Heart left ventricle (tissue), 16 donors: ENCODE measurements at regions of chr20 and their contacts with region 1.

Region 1: GRCh38 chr20:9359561-9360308 is 154.7 kb upstream of the LAMP5 start:
- DNase-seq: peak in 4 of 5 donors; percentile 29 to 48 (median 42)
- ATAC-seq: peak; percentile 49 to 78 (median 68)
- H3K4me3 ChIP-seq: peak overlapping the region in 1 of 12 donors; percentile 11
- H3K27ac ChIP-seq: peak overlapping the region in 5 of 12 donors; percentile 4 to 46 (median 24)
- H3K4me1 ChIP-seq: peaks cover 0 to 20% (median 11%) of the 10 kb centered on the region in 12 donors
- H3K27me3 ChIP-seq: no peaks in the 10 kb centered on the region
- CTCF ChIP-seq: peak; percentile 27 to 74 (median 60)
- POLR2A ChIP-seq: no peak

Region 2: DNA sequence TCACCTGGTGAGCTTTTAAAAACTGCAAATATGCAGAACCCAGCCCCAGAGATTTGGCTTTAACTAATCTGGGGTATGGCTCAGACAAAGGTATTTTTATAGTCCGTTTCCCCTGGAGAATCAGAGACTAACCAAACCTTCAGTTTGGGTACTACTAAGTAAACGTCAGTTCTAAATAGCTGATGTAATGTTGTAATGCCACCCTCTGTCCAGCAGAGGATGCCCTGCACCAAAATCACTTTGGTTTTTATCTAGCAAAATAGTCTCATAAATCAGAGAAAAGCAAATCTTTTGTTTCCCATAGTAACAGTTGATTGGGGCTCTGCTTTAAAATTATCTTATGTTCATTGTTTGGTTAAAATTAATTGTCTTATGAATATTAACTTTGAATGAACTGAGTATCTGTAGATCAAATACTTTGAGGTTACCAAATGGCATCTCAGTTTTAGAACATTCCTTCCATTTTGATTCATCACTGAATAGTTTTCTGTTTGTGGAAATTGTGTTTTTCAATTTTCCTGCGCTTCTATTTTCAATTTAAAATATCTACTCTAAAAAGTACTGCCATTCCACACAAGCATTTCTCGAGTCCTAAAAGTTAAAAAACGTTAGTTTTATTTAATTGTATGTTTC is 569.2 kb before region 1 on chr20:
- intact Hi-C with region 1: loop called (anchors 1 to 5 kb)
- DNase-seq: peak in 3 of 5 donors; percentile 19 to 38 (median 37)
- ATAC-seq: peak in 1 of 4 donors; percentile 50
- H3K4me3 ChIP-seq: no peak overlapping the region
- H3K27ac ChIP-seq: no peak overlapping the region
- H3K4me1 ChIP-seq: peaks cover 0 to 8% (median 0%) of the 10 kb centered on the region in 12 donors
- H3K27me3 ChIP-seq: no peaks in the 10 kb centered on the region
- CTCF ChIP-seq: peak; percentile 86 to 100 (median 94)
- POLR2A ChIP-seq: no peak

Region 3: DNA sequence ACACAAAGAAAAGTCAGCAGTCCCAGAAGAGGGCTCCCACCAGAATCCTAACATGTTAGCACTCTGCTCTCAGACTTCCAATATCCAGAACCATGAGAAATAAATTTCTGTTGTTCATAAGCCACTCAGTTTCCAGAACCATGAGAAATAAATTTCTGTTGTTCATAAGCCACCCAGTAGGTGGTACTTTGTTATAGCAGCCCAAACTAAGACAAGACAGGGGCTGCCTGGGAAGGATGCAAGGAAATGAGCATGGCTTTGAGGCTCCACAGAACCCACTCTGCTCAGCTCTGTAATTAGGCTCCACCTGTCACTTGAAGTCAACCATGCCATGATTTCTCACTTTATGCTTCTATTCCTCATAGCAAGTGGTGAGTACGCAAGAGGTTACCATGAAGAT is 383.4 kb before region 1 on chr20:
- intact Hi-C with region 1: loop called in 1 of 10 experiments (anchors 10 kb)
- DNase-seq: no peak
- ATAC-seq: no peak
- H3K4me3 ChIP-seq: no peak overlapping the region
- H3K27ac ChIP-seq: no peak overlapping the region
- H3K4me1 ChIP-seq: peaks cover 0 to 15% (median 5%) of the 10 kb centered on the region in 12 donors
- H3K27me3 ChIP-seq: no peaks in the 10 kb centered on the region
- CTCF ChIP-seq: no peak
- POLR2A ChIP-seq: no peak

Region 4: GRCh38 chr20:9172851-9173250 is 186.9 kb before region 1 on chr20:
- intact Hi-C with region 1: loop called in 1 of 10 experiments (anchors 10 kb)
- DNase-seq: no peak
- ATAC-seq: peak in 3 of 4 donors; percentile 55 to 65 (median 64)
- H3K4me3 ChIP-seq: no peak overlapping the region
- H3K27ac ChIP-seq: peak overlapping the region in 1 of 12 donors; percentile 13
- H3K4me1 ChIP-seq: peaks cover 0 to 34% (median 20%) of the 10 kb centered on the region in 12 donors
- H3K27me3 ChIP-seq: no peaks in the 10 kb centered on the region
- CTCF ChIP-seq: peak in 11 of 12 donors; percentile 20 to 66 (median 44)
- POLR2A ChIP-seq: no peak

Region 5: GRCh38 chr20:9185511-9185910 is 174.2 kb before region 1 on chr20:
- intact Hi-C with region 1: no loop called
- DNase-seq: no peak
- ATAC-seq: peak in 1 of 4 donors; percentile 18
- H3K4me3 ChIP-seq: no peak overlapping the region
- H3K27ac ChIP-seq: no peak overlapping the region
- H3K4me1 ChIP-seq: peaks cover 0 to 21% (median 10%) of the 10 kb centered on the region in 12 donors
- H3K27me3 ChIP-seq: no peaks in the 10 kb centered on the region
- CTCF ChIP-seq: no peak
- POLR2A ChIP-seq: no peak

Region 6: DNA sequence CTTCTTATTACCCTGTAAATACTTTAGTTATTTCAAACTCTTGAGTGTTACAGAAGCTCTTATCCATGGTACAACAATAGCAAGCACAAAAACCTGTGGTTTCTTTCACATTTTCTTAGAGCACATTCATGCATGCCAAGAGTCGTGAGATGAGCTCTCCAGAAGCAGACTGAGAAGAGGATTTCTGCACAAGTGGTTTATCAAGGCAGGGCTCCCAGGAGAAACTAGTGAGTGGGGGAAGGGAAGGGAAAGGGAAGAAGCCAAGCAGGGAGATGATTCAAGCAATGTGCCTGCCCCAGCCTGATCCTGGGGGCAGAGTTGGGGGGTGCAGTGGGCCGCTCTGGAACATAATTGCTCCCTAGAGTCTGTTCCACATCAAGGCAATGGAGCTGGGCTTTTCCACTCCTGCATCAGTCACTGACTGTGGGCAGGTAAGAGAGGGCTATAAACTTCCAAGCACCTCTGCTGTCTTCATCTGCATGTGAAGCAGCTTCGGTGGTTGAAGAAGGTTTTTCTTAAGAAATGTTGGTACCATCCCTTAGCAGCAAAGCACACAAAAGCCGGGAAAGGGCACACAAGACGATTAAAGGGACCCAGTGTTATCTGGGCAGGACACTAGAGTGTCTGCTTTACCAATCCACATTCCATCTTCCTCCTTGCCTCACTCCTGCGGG is 138.7 kb before region 1 on chr20:
- intact Hi-C with region 1: loop called in 2 of 10 experiments (anchors 10 kb)
- DNase-seq: peak in 1 of 5 donors; percentile 25
- ATAC-seq: peak in 1 of 4 donors; percentile 7
- H3K4me3 ChIP-seq: no peak overlapping the region
- H3K27ac ChIP-seq: peak overlapping the region in 2 of 12 donors; percentile 10 to 16
- H3K4me1 ChIP-seq: peaks cover 4 to 56% (median 29%) of the 10 kb centered on the region in 12 donors
- H3K27me3 ChIP-seq: no peaks in the 10 kb centered on the region
- CTCF ChIP-seq: no peak
- POLR2A ChIP-seq: no peak

Region 7: GRCh38 chr20:9467995-9468394 is 108.3 kb after region 1 on chr20:
- intact Hi-C with region 1: no loop called
- DNase-seq: no peak
- ATAC-seq: no peak
- H3K4me3 ChIP-seq: no peak overlapping the region
- H3K27ac ChIP-seq: no peak overlapping the region
- H3K4me1 ChIP-seq: no peaks in the 10 kb centered on the region
- H3K27me3 ChIP-seq: no peaks in the 10 kb centered on the region
- CTCF ChIP-seq: peak in 10 of 12 donors; percentile 16 to 48 (median 38)
- POLR2A ChIP-seq: no peak

Region 8: GRCh38 chr20:10157549-10157948 is 797.8 kb after region 1 on chr20:
- intact Hi-C with region 1: no loop called
- DNase-seq: no peak
- ATAC-seq: no peak
- H3K4me3 ChIP-seq: no peak overlapping the region
- H3K27ac ChIP-seq: no peak overlapping the region
- H3K4me1 ChIP-seq: no peaks in the 10 kb centered on the region
- H3K27me3 ChIP-seq: peaks cover 0 to 4% (median 0%) of the 10 kb centered on the region in 9 donors
- CTCF ChIP-seq: no peak
- POLR2A ChIP-seq: no peak